Dendritic cell treated with granulocyte-macrophage colony-stimulating factor and Interleukin-4, amounts not matched to agents 40 ng/mL and 50 ng/mL, for 4 days (primary cell): ENCODE measurements at regions of chr20 and their contacts with region 1.

Region 1: GRCh38 chr20:47318586-47319516 is 37.6 kb downstream of the ZMYND8 start:
- H3K4me3 Mint-ChIP-seq: peak overlapping the region; percentile 61
- H3K27ac Mint-ChIP-seq: peak overlapping the region; percentile 97
- H3K4me1 Mint-ChIP-seq: peaks cover 81% of the 10 kb centered on the region
- H3K27me3 Mint-ChIP-seq: no peaks in the 10 kb centered on the region

Region 2: DNA sequence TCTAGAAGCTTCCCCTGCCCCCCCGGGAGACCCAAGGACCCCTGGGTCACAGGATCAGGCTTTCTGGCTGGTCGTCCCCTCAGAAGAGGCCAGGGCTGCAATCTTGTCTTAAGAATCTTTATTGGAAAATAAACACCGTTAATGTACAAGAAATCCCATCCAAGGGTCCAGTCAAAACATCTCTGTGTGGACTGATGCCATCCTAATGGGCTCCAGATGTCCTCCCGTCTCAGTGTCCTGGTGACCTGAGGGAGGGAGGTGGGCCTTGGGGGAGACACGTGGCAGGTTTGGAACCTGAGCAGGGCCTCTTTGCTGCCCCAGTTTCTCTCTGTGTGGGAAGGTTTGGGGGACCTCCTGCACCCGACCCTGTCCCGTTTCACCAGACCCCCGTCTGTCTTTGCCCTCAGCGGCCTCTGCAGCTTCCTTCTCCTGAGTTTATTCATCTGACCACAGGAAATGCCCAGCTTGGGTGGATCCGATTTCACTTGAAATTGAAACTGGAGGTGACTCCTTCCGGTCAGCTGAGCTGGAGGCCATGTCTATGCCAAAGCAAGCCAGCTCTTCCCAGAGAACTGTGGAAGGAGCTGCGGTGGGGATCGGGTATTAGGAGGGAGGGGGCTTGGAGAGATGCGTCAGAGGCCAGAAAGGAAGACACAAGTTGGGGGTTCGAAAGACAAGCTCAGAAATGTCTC is 534.3 kb before region 1 on chr20:
- intact Hi-C with region 1: no loop called
- H3K4me3 Mint-ChIP-seq: no peak overlapping the region
- H3K27ac Mint-ChIP-seq: no peak overlapping the region
- H3K4me1 Mint-ChIP-seq: no peaks in the 10 kb centered on the region
- H3K27me3 Mint-ChIP-seq: peaks cover 11% of the 10 kb centered on the region

Region 3: GRCh38 chr20:47357296-47358035 is 38.6 kb after region 1 on chr20:
- intact Hi-C with region 1: loop called (anchors 2 kb)
- H3K4me3 Mint-ChIP-seq: peak overlapping the region; percentile 61
- H3K27ac Mint-ChIP-seq: no peak overlapping the region
- H3K4me1 Mint-ChIP-seq: peaks cover 96% of the 10 kb centered on the region
- H3K27me3 Mint-ChIP-seq: no peaks in the 10 kb centered on the region